Astrocyte of the cerebellum (primary cell): ENCODE measurements at regions of chr12 and their contacts with region 1.

Region 1: GRCh38 chr12:50862316-50862715 is 19.6 kb downstream of the TMPRSS12 start:
- DNase-seq: no peak
- H3K4me3 ChIP-seq: no peak overlapping the region
- CTCF ChIP-seq: no peak

Region 2: DNA sequence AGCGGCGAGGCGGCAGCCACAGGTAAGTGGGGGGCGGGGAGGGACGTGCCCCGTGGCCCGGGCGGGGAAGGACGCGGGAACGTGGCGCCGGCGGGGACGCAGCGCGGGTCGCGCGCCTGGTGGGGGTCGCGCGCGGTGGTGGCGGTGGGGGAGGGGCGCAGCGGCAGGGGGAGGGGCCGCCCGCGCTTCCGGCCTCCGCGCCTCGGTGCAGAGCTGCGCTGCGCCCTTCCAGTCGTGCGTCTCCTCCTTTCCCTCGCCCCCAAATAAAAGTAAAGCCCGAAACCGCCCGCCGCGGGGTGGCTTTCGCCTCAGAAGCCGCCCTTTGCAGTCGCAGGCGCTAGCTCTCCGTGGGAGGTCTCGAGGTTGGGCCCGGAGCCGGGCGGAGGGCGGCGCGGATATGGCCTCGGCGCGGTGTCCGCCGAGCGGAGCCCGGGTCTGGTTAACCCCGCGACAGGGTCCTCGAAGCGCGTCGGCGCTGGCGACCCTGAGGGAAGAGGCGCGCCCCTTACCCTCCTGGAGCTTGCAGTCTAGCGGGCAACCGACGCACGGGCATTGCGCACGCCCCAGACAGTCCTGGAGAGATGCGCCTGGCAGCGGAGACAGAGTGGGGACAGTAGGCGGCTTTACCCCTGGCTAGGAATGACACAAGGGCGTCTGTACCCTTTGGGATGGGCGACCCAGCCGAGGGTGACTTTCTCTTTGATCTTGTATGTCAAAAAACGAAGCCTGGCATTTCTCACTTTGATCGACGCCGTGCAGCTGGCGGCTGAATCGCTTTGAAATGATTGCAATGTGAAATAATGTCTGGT is 97.8 kb before region 1 on chr12:
- in situ Hi-C with region 1: loop called (anchors 5 kb)
- DNase-seq: no peak
- H3K4me3 ChIP-seq: peak overlapping the region; percentile 93
- CTCF ChIP-seq: no peak